Gastrocnemius medialis (tissue), 4 donors: ENCODE measurements at regions of chr7 and their contacts with region 1.

Region 1: DNA sequence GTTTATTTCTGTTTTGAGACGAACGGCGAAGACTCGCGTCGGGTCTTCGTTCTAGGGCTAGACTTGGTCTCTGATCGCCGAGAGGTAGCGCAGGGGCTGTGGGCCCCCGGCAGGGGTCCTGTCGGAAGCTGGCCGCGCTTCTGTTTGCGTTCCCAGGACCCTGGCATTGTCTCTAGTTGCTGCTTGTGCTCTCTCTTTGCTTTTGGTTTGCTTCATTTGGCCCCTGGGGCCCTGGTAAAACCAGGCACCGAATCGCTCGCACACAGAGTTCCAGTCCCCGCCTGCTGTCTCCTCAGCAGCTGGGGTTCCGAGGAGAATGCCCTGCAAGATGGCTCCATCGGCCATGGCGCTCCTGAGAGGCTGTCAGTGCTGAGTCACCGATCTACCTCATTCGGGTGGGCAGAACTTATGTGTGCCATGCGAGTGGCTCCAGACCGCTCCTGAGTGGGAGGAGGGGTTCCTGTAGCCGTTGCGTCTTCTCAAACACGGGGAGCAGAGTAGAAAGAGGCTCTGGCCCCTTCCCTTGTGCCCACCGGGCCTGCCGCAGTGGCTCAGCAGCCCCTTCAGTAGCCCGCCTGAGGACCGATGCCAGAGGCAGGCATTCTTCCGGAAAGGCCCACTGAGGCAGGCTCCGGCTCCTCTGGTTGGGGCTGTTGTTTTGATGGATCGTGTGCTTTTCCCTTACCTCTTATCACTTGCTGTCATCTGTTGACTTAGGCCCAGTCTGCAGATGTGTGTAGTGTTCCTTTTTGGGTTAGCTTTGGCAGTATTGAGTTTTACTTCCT is 826 bp downstream of the CHPF2 start:
- DNase-seq: no peak
- ATAC-seq: peak; percentile 11 to 31
- H3K4me3 ChIP-seq: peak overlapping the region; percentile 87 to 98 (median 92)
- H3K27ac ChIP-seq: peak overlapping the region; percentile 71 to 88 (median 86)
- H3K4me1 ChIP-seq: peaks cover 30 to 35% of the 10 kb centered on the region in 2 donors
- H3K27me3 ChIP-seq: no peaks in the 10 kb centered on the region
- CTCF ChIP-seq: no peak
- POLR2A ChIP-seq: no peak

Region 2: GRCh38 chr7:151131592-151132293 is 101.4 kb before region 1 on chr7:
- in situ Hi-C with region 1: no loop called
- intact Hi-C with region 1: no loop called
- DNase-seq: no peak
- ATAC-seq: no peak
- H3K4me3 ChIP-seq: no peak overlapping the region
- H3K27ac ChIP-seq: no peak overlapping the region
- H3K4me1 ChIP-seq: peaks cover 0 to 3% of the 10 kb centered on the region in 2 donors
- H3K27me3 ChIP-seq: no peaks in the 10 kb centered on the region
- CTCF ChIP-seq: no peak
- POLR2A ChIP-seq: no peak

Region 3: GRCh38 chr7:151754142-151754590 is 521.1 kb after region 1 on chr7:
- in situ Hi-C with region 1: no loop called
- intact Hi-C with region 1: loop called (anchors 1 kb)
- DNase-seq: peak; percentile 76 to 86
- ATAC-seq: peak; percentile 97 to 99
- H3K4me3 ChIP-seq: no peak overlapping the region
- H3K27ac ChIP-seq: peak overlapping the region; percentile 41 to 60 (median 50)
- H3K4me1 ChIP-seq: peaks cover 17 to 20% of the 10 kb centered on the region in 2 donors
- H3K27me3 ChIP-seq: no peaks in the 10 kb centered on the region
- CTCF ChIP-seq: peak; percentile 84 to 92 (median 90)
- POLR2A ChIP-seq: no peak